Stomach (tissue), 19 donors: ENCODE measurements at regions of chr22 and their contacts with region 1.

Region 1: DNA sequence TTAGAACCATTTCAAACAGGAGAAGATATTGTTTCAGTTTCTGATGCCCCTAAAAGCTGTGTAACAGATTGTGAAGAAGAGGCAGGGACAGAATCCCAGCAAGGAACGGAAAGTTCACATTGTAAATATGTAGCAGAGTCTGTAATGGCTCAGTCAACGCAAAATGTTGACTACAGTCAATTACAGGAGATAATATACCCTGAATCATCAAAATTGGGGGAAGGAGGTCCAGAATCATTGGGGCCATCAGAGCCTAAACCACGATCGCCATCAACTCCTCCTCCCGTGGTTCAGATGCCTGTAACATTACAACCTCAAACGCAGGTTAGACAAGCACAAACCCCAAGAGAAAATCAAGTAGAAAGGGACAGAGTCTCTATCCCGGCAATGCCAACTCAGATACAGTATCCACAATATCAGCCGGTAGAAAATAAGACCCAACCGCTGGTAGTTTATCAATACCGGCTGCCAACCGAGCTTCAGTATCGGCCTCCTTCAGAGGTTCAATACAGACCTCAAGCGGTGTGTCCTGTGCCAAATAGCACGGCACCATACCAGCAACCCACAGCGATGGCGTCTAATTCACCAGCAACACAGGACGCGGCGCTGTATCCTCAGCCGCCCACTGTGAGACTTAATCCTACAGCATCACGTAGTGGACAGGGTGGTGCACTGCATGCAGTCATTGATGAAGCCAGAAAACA is 40.8 kb downstream of the IGLL1 start:
- DNase-seq: peak; percentile 83 to 92
- H3K4me3 ChIP-seq: no peak overlapping the region
- H3K27ac ChIP-seq: no peak overlapping the region
- H3K4me1 ChIP-seq: peaks cover 3 to 41% (median 21%) of the 10 kb centered on the region in 4 donors
- H3K27me3 ChIP-seq: no peaks in the 10 kb centered on the region
- CTCF ChIP-seq: peak in 6 of 7 experiments; percentile 66 to 97 (median 88)
- EP300 ChIP-seq: no peak
- POLR2A ChIP-seq: no peak

Region 2: DNA sequence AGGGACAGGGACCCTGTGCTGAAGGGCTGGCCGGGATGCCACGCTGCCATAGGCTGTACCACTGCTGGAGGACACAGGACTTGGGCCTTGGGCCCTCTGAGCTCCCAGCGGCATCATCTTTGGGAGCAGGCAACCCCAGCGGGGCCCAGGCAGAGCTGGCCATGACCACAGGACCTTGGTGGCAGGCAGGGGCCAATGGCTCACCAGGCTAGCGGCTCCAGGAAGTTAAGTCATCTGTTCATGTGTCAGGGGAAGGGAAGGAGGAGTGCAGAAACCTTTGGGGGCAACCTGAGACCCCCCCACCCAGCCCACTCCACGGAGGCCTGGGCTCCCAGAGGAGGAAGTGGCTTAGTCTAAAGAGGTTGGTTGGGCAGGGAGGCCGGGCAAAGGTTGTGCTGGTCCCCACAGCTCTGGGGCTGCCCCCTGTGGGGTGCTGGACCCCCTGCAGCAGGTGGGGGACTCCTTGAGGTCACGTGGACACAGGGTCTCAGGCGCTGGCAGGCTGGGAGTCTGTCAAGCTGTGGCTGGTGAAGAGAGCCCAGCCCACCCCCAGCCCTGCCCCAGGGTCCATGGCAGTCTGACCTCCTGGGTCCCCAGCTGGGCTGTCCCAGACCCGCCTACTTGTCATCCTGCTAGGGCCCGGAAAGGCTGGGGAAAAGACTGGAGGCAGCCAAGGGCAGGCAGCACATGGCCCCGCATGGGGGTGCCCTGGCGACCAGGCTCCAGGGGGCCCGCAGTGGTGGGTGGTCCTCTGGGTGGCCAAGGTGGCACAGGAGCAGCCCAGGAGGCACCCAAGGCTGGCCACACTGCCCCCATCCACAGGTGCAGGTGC is 143.5 kb before region 1 on chr22:
- intact Hi-C with region 1: loop called (anchors 10 kb)
- DNase-seq: no peak
- H3K4me3 ChIP-seq: no peak overlapping the region
- H3K27ac ChIP-seq: no peak overlapping the region
- H3K4me1 ChIP-seq: no peaks in the 10 kb centered on the region
- H3K27me3 ChIP-seq: no peaks in the 10 kb centered on the region
- CTCF ChIP-seq: no peak
- EP300 ChIP-seq: no peak
- POLR2A ChIP-seq: no peak

Region 3: GRCh38 chr22:23467721-23468296 is 71.5 kb before region 1 on chr22:
- intact Hi-C with region 1: no loop called
- DNase-seq: no peak
- H3K4me3 ChIP-seq: no peak overlapping the region
- H3K27ac ChIP-seq: no peak overlapping the region
- H3K4me1 ChIP-seq: peaks cover 0 to 6% (median 0%) of the 10 kb centered on the region in 4 donors
- H3K27me3 ChIP-seq: no peaks in the 10 kb centered on the region
- CTCF ChIP-seq: no peak
- EP300 ChIP-seq: no peak
- POLR2A ChIP-seq: no peak

Region 4: GRCh38 chr22:23743303-23743705 is 204.0 kb after region 1 on chr22:
- intact Hi-C with region 1: no loop called
- DNase-seq: peak in 1 of 2 donors; percentile 70
- H3K4me3 ChIP-seq: no peak overlapping the region
- H3K27ac ChIP-seq: peak overlapping the region in 1 of 5 donors; percentile 17
- H3K4me1 ChIP-seq: peaks cover 0 to 17% (median 2%) of the 10 kb centered on the region in 4 donors
- H3K27me3 ChIP-seq: no peaks in the 10 kb centered on the region
- CTCF ChIP-seq: no peak
- EP300 ChIP-seq: no peak
- POLR2A ChIP-seq: no peak

Region 5: GRCh38 chr22:23849009-23850006 is 310.0 kb after region 1 on chr22:
- intact Hi-C with region 1: loop called (anchors 10 kb)
- DNase-seq: peak; percentile 91 to 94
- H3K4me3 ChIP-seq: peak overlapping the region in 3 of 4 donors; percentile 9 to 40 (median 9)
- H3K27ac ChIP-seq: no peak overlapping the region
- H3K4me1 ChIP-seq: peaks cover 12 to 40% (median 26%) of the 10 kb centered on the region in 4 donors
- H3K27me3 ChIP-seq: peaks cover 0 to 5% (median 0%) of the 10 kb centered on the region in 3 donors
- CTCF ChIP-seq: peak in 6 of 7 experiments; percentile 42 to 98 (median 92)
- EP300 ChIP-seq: no peak
- POLR2A ChIP-seq: no peak